ENCODE measurements at regions of chr4 and their contacts with region 1.

Region 1: GRCh38 chr4:161182913-161183312 is 980.9 kb downstream of the FSTL5 start:
- DNase-seq: no peak
- H3K4me3 ChIP-seq: no peak overlapping the region
- CTCF ChIP-seq: no peak

Region 2: GRCh38 chr4:161132715-161133425 is 50.0 kb before region 1 on chr4:
- in situ Hi-C with region 1: no loop called
- DNase-seq: no peak
- H3K4me3 ChIP-seq: no peak overlapping the region
- CTCF ChIP-seq: no peak

Region 3: GRCh38 chr4:161252520-161253141 is 69.7 kb after region 1 on chr4:
- in situ Hi-C with region 1: loop called (anchors 5 kb)
- DNase-seq: no peak
- H3K4me3 ChIP-seq: no peak overlapping the region
- CTCF ChIP-seq: peak; percentile 60

Measured in astrocyte of the cerebellum (primary cell).